ENCODE measurements at regions of chr21 and their contacts with region 1.

Region 1: GRCh38 chr21:26469789-26470188 is 103.3 kb downstream of the CYYR1 start:
- DNase-seq: no peak
- H3K4me3 Mint-ChIP-seq: no peak overlapping the region
- H3K27ac Mint-ChIP-seq: no peak overlapping the region
- H3K4me1 Mint-ChIP-seq: peaks cover 12% of the 10 kb centered on the region
- H3K27me3 Mint-ChIP-seq: no peaks in the 10 kb centered on the region

Region 2: GRCh38 chr21:26389971-26390641 is 79.7 kb before region 1 on chr21:
- CTCF ChIA-PET with region 1: no interaction called
- POLR2A ChIA-PET with region 1: no interaction called
- intact Hi-C with region 1: no loop called
- DNase-seq: no peak
- H3K4me3 Mint-ChIP-seq: no peak overlapping the region
- H3K27ac Mint-ChIP-seq: no peak overlapping the region
- H3K4me1 Mint-ChIP-seq: no peaks in the 10 kb centered on the region
- H3K27me3 Mint-ChIP-seq: no peaks in the 10 kb centered on the region

Region 3: GRCh38 chr21:26451081-26451740 is 18.6 kb before region 1 on chr21:
- CTCF ChIA-PET with region 1: no interaction called
- POLR2A ChIA-PET with region 1: no interaction called
- intact Hi-C with region 1: loop called (anchors 1 kb)
- DNase-seq: no peak
- H3K4me3 Mint-ChIP-seq: no peak overlapping the region
- H3K27ac Mint-ChIP-seq: no peak overlapping the region
- H3K4me1 Mint-ChIP-seq: no peaks in the 10 kb centered on the region
- H3K27me3 Mint-ChIP-seq: no peaks in the 10 kb centered on the region

Region 4: GRCh38 chr21:26686278-26686677 is 216.5 kb after region 1 on chr21:
- CTCF ChIA-PET with region 1: no interaction called
- POLR2A ChIA-PET with region 1: no interaction called
- intact Hi-C with region 1: loop called (anchors 10 kb)
- DNase-seq: peak; percentile 27
- H3K4me3 Mint-ChIP-seq: no peak overlapping the region
- H3K27ac Mint-ChIP-seq: no peak overlapping the region
- H3K4me1 Mint-ChIP-seq: peaks cover 3% of the 10 kb centered on the region
- H3K27me3 Mint-ChIP-seq: peaks cover 2% of the 10 kb centered on the region